ENCODE measurements at regions of chr3 and their contacts with region 1.

Region 1: DNA sequence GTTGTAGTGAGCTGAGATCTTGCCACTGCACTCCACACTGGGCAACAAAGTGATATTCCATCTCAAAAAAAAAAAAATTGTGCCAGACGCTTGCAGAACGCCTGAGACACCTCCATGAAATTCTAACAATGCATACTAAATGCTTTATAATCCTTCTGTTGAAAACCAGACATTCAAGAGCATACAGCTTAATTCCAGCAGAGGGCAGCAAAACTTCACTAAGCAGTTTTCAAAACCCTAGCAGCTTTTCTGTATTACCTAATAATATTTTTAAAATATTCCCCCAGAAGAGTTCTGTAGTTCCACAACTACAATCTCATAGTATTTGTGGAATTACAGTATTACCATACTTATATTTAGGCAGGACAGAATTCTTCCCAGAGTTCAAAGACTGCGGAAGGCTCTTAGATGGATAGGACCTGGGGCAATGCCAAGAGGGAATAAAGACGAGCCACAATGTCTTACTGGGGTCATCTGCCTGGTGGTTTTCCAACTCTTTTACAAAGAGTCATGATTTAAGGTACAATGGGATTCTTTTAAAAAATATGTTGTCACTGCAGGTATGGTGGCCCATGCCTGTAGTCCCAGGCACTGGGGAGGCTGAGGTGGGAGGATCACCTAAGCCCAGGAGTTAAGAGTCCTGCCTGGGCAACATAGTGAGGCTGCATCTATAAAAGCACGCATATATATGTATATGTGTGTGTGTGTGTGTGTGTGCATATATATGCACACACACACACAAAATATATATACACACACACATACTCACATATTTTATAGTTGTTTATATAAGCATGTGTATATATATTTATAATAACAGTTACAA is 19.6 kb upstream of the TASOR start:
- DNase-seq: no peak
- ATAC-seq: peak; percentile 78
- H3K4me3 ChIP-seq: no peak overlapping the region
- H3K27ac ChIP-seq: no peak overlapping the region
- H3K4me1 ChIP-seq: no peaks in the 10 kb centered on the region
- H3K27me3 ChIP-seq: no peaks in the 10 kb centered on the region

Region 2: GRCh38 chr3:56573501-56573900 is 129.2 kb before region 1 on chr3:
- intact Hi-C with region 1: no loop called
- DNase-seq: no peak
- ATAC-seq: no peak
- H3K4me3 ChIP-seq: no peak overlapping the region
- H3K27ac ChIP-seq: no peak overlapping the region
- H3K4me1 ChIP-seq: no peaks in the 10 kb centered on the region
- H3K27me3 ChIP-seq: no peaks in the 10 kb centered on the region

Region 3: GRCh38 chr3:56988458-56989168 is 285.9 kb after region 1 on chr3:
- intact Hi-C with region 1: loop called (anchors 1 kb)
- DNase-seq: peak; percentile 85 to 89
- ATAC-seq: peak; percentile 88
- H3K4me3 ChIP-seq: no peak overlapping the region
- H3K27ac ChIP-seq: no peak overlapping the region
- H3K4me1 ChIP-seq: no peaks in the 10 kb centered on the region
- H3K27me3 ChIP-seq: no peaks in the 10 kb centered on the region